Posterior cingulate gyrus (tissue), 11 donors: ENCODE measurements at regions of chr2 and their contacts with region 1.

Region 1: DNA sequence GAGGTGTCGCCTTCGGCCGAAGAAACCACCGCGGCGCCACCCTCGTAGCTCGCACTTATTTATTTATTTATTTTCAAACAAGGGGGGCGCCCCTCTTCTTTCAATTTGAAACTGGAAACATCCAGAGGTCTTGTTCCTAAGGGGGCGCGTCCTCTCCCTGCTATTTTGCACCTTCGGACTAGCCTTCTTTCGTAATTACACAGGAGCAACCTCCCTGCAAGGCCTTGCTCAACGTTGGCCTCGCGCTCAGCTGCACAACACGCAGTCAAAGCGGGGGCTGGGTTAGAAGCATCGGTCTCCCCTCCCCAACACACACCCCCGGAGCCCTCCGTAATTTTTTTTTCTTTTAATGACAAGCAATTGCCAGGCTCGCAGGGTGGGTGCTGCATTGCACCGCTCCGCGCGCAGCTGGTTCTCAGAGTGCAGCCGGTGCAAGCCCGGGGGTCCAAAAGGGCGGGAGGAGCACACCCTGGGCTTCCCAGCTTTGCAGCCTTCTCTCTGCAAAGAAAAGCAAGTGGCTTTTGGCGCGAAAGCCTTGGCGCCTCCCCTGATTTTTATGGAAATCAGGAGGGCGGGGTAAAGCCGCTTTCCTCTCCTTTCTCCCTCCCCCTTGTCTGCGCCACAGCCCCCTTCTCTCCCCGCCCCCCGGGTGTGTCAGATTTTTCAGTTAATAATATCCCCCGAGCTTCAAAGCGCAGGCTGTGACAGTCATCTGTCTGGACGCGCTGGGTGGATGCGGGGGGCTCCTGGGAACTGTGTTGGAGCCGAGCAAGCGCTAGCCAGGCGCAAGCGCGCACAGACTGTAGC is at the start of gene MYCN:
- DNase-seq: peak; percentile 57 to 95 (median 80)

Region 2: GRCh38 chr2:15730545-15731212 is 209.4 kb before region 1 on chr2:
- intact Hi-C with region 1: loop called (anchors 10 kb)
- DNase-seq: peak; percentile 69 to 98 (median 90)

Region 3: GRCh38 chr2:15782009-15782751 is 157.9 kb before region 1 on chr2:
- intact Hi-C with region 1: no loop called
- DNase-seq: peak in 1 of 10 donors; percentile 37

Region 4: DNA sequence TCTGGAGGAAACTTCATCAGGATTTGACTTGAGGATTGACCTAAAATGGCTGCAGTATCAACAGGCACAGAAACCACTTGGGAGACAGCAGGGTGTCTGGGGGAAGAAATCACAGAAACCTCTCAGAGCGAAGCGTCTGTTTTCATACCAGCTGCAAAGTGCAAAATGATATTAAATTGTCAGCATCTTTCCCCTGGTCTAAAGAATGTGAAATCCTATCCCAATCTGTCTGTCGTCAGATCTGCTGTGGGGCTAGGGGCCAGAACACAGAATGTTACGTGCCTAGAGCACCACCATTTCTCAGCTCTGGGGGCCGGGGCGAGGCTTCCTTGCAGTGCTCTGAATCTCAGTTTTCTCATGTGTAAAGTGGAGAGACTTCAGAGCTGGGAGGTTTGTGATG is 53.8 kb before region 1 on chr2:
- intact Hi-C with region 1: no loop called
- DNase-seq: no peak

Region 5: DNA sequence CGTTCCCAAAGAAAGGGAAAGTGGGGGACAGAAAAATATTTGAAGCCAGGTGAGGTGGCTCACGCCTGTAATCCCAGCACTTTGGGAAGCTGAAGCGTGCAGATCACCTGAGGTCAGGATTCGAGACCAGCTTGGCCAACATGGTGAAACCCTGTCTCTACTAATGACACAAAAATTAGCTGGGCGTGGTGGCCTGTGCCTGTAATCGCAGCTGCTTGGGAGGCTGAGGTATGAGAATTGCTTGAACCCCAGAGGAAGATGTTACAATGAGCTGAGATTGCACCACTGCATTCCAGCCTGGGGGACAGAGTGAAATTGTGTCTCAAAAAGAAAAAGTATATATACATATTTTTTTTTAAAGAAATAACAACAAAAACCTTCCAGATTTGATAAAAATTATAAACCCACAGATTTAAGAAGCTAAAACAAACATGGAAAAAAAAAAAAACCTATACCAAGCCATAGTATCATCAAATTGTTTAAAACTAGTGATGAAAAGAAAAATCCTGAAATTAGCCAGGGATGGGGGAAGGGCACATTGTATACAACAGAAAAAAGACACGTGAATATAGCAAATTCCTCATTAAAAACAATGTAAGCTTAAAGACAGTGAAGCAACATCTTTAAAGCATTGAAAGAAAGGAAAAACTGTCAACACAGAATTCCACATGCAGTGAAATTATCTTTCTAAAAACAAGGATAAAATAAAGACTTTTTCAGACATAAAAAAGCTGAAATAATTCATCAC is 40.1 kb before region 1 on chr2:
- intact Hi-C with region 1: no loop called
- DNase-seq: no peak

Region 6: GRCh38 chr2:15976354-15976753 is 36.3 kb after region 1 on chr2:
- intact Hi-C with region 1: no loop called
- DNase-seq: no peak

Region 7: DNA sequence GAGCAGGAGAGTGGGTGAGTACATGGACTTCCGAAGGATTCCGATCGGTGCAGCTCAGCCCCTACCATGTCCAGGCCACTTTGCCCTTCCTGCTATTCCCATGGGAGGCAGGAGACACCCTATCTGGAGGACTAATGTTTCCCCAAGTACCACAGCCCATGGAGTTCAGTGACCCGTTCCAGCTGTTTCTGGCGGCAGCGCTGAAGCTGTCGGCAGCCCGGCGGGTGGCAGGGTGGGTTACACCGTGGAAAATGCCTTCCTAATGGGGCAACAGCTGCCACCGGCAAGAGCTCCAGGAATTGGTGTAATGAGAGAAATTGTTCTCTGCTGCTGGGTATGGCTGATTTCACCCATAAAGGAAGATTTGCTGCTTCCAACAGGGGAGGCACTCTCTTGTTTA is 98.6 kb after region 1 on chr2:
- intact Hi-C with region 1: loop called (anchors 5 kb)
- DNase-seq: no peak

Region 8: GRCh38 chr2:16218625-16219024 is 278.6 kb after region 1 on chr2:
- intact Hi-C with region 1: loop called (anchors 5 kb)
- DNase-seq: peak in 3 of 10 donors; percentile 25 to 49 (median 40)

Region 9: DNA sequence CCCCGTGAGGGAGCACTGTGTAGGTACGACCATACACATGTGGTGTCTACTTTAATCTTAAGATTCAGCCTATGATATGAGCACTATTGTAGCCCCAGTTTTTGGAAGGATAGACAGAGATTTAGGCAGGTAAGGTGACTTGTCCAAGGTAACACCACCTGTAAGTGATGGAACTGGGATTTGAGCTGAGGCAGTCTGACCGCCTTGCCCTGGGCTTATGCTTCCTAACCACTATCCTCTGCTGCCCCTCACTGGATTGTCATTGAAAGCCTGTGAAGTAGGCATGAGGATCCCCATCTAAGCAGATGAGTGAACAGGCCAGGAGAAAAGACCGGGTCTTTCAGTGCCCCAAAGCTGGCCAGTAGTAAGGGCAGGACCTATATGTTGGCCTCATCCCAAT is 381.8 kb after region 1 on chr2:
- intact Hi-C with region 1: loop called (anchors 1 kb)
- DNase-seq: peak in 2 of 10 donors; percentile 19 to 52

Region 10: GRCh38 chr2:16507655-16508489 is 567.8 kb after region 1 on chr2:
- intact Hi-C with region 1: loop called (anchors 1 kb)
- DNase-seq: peak; percentile 26 to 95 (median 60)